Tibial artery (tissue), 4 donors: ENCODE measurements at regions of chr2 and their contacts with region 1.

Region 1: DNA sequence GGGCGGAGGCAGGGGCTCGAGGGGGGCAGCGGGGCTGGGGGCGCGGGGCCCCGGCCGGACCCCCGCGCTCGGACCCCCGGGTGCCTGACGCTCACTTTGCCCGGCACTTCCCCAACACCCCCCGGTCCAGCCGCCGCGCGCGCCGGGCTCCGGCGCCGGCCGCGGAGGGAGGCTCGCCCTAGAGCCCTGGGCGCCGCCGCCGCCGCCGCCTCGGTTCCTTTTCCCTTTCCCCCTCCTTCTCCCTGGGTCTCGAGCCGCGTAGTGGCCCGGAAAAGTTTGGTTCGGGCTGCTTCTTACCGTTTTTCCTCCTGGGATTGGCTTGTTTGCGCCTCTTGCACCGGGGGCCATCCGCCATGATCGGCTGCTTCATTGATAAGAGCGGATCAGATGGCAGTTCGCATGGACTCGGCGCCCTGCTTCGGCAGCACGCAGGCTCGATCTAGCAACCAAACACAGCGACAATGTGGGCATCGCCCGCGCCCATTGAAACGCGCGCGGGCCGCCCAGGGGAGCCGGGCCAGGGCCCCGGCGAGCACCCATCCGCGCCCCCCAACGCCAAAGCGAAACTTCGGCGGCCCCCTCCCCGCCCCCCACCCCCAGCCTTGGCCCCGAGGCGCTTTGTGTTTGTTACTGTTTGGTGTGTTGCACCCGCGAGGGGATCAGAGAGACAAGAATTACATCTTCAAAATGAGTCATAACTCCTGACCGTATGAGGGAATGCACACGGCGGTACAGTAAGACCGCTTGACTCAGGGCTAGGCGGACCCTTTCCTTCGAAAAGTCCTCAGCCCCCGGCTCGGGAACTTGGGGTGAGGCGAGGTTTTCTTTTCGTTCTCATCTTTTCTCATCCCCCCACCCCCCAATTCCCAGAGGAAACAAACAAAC is 2.7 kb downstream of the ZEB2 start:
- DNase-seq: peak; percentile 80 to 81
- H3K4me3 ChIP-seq: peak overlapping the region; percentile 71 to 73
- H3K27ac ChIP-seq: peak overlapping the region; percentile 97 to 99
- H3K4me1 ChIP-seq: peaks cover 0 to 29% (median 4%) of the 10 kb centered on the region in 4 donors
- H3K27me3 ChIP-seq: no peaks in the 10 kb centered on the region
- CTCF ChIP-seq: no peak

Region 2: DNA sequence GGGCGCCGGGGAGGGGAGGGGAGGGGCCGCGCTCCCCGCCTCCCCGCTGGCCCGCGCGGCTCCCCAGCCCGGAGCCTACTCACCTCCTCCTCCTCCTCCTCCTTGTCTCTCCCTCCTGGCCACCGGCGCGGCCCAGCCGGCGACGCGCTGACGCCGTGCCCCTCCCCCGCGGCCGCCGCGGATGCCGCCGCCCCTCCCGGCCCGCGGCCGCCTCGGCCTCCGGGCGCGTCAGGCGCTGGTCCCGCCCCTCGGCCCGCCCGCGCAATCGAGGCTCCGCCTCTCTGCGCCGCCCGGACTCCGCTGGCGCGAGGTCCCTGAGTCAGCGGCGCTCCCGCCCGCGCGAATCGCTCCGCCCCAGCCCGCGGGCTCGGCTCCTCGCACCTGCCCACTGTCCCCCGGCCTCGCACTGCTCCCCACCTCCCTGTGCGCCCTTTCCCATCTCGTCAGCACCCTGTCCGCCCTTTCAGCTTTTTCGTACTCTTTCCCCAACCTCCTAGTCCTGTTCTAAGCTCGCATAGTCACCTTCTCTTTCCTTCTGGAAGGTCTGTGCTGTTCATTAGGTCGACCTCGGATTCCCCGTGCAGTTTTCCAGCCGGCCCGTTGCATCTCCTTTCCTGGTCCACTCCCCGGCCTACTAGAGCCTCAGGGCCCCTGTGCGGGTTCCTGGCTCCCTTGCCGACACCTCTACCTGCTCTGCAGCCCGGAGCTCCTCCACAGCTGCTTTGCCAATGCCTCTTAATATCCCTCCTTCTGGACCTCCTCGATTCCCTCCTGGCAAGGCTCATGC is 184.7 kb before region 1 on chr2:
- intact Hi-C with region 1: loop called (anchors 5 kb)
- DNase-seq: peak; percentile 78 to 95
- H3K4me3 ChIP-seq: peak overlapping the region; percentile 74 to 88
- H3K27ac ChIP-seq: peak overlapping the region; percentile 79 to 91
- H3K4me1 ChIP-seq: peaks cover 0 to 17% (median 4%) of the 10 kb centered on the region in 4 donors
- H3K27me3 ChIP-seq: no peaks in the 10 kb centered on the region
- CTCF ChIP-seq: no peak

Region 3: GRCh38 chr2:144449028-144449406 is 68.2 kb before region 1 on chr2:
- intact Hi-C with region 1: loop called (anchors 5 kb)
- DNase-seq: peak in 1 of 2 donors; percentile 73
- H3K4me3 ChIP-seq: peak overlapping the region; percentile 38 to 41
- H3K27ac ChIP-seq: peak overlapping the region; percentile 46 to 74
- H3K4me1 ChIP-seq: peaks cover 0 to 98% (median 24%) of the 10 kb centered on the region in 4 donors
- H3K27me3 ChIP-seq: no peaks in the 10 kb centered on the region
- CTCF ChIP-seq: peak; percentile 36 to 48

Region 4: GRCh38 chr2:145022666-145023330 is 505.6 kb after region 1 on chr2:
- intact Hi-C with region 1: loop called (anchors 10 kb)
- DNase-seq: no peak
- H3K4me3 ChIP-seq: peak overlapping the region; percentile 28 to 31
- H3K27ac ChIP-seq: peak overlapping the region; percentile 60 to 74
- H3K4me1 ChIP-seq: peaks cover 0 to 30% (median 13%) of the 10 kb centered on the region in 4 donors
- H3K27me3 ChIP-seq: no peaks in the 10 kb centered on the region
- CTCF ChIP-seq: no peak

Region 5: DNA sequence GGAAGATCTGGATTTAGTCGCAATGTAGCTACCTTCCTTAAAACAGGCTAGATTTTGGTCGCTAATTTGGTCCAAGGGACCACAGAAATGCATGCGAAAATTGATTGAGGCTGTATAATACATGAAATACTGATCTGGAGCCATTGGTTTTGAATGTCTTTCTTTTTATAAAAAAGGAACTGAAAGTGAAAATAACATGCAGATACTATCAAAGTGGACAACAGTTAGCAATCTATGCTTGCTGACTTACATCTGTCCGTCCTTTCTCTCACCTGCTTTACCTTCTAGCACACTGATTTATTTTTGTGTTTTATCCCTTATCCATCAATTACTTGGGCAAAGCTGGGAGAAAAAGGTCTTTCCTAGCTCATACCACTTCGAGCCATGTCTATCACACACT is 1867.8 kb after region 1 on chr2:
- intact Hi-C with region 1: no loop called
- DNase-seq: no peak
- H3K4me3 ChIP-seq: no peak overlapping the region
- H3K27ac ChIP-seq: no peak overlapping the region
- H3K4me1 ChIP-seq: no peaks in the 10 kb centered on the region
- H3K27me3 ChIP-seq: no peaks in the 10 kb centered on the region
- CTCF ChIP-seq: no peak